ENCODE measurements at regions of chr17 and their contacts with region 1.

Region 1: GRCh38 chr17:46940621-46941404 is 17.9 kb downstream of the GOSR2 start:
- DNase-seq: no peak
- H3K4me3 ChIP-seq: no peak overlapping the region
- CTCF ChIP-seq: peak; percentile 96

Region 2: DNA sequence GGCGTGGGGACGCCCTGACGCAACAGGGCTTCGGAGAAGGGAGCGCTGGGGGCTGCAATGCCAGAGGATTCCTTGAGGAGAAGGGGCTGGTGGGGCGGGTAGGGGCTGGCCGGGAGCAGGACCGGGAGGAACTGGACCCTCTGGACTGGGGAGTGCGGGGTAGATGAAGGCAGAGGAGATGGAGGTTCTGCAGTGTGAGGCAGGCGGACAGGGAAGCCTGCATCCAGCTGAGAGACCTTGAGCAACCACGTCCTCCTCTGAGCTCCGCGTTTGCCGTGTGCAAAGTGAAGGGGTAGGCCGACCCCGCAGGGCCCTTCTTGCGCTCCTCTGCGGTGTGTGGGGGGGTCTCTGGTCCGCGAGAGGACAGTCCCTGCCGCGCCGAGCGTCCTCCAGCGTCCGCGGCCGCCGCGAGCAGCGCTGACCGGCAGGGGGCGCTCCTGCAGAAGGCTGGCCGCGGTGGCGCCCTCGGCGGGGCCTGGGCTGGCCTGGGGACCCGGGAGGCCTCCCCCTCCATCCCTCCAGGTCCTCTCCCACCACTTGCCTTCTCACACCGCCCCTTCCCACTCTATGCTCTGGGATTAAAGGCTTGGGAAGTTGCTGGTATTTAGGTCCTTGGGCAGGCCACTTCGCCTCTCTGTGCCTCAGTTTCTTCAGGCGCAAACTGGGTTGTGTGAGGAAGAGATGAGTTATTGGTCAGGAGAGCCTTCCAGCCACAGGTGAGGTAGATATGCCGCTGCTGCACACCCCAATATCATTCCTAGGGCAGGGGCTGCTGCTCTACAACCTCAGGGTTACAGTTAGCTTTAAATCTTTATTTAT is 99.0 kb before region 1 on chr17:
- CTCF ChIA-PET with region 1: interaction called, 94 read pairs
- POLR2A ChIA-PET with region 1: no interaction called
- DNase-seq: no peak
- H3K4me3 ChIP-seq: peak overlapping the region; percentile 37
- CTCF ChIP-seq: peak; percentile 69

Region 3: DNA sequence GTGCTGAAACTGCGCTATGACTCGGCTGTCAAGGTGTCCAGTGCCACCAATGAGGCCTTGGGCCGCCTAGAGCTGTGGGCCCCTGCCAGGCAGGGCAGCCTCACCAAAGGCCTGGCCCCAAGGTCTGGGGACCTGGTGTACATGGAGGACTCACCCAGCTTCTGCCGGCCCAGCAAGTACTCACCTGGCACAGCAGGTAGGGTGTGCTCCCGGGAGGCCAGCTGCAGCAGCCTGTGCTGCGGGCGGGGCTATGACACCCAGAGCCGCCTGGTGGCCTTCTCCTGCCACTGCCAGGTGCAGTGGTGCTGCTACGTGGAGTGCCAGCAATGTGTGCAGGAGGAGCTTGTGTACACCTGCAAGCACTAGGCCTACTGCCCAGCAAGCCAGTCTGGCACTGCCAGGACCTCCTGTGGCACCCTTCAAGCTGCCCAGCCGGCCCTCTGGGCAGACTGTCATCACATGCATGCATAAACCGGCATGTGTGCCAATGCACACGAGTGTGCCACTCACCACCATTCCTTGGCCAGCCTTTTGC is 64.4 kb before region 1 on chr17:
- CTCF ChIA-PET with region 1: no interaction called
- POLR2A ChIA-PET with region 1: no interaction called
- DNase-seq: no peak
- H3K4me3 ChIP-seq: no peak overlapping the region
- CTCF ChIP-seq: peak; percentile 31

Region 4: DNA sequence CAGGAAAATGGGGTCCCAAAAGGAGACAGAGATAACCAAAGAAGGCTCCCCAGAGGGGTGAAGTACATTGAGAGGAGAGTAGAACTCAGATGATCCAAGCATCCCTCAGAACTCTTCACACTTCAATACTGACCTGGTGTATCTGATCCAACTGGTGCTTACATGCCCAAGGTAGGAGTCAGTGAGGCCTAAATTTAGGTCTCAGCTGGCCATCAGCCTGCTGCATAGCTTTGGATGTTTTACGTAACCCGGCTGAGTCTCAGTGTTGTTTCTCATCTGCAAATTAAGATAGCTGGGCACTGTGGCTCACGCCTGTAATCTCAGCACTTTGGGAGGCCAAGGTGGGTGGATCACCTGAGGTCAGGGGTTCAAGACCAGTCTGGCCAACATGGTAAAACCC is 29.5 kb before region 1 on chr17:
- CTCF ChIA-PET with region 1: interaction called, 11 read pairs
- POLR2A ChIA-PET with region 1: no interaction called
- DNase-seq: no peak
- H3K4me3 ChIP-seq: no peak overlapping the region
- CTCF ChIP-seq: no peak

Region 5: GRCh38 chr17:46929413-46929812 is 11.4 kb before region 1 on chr17:
- CTCF ChIA-PET with region 1: interaction called, 61 read pairs
- POLR2A ChIA-PET with region 1: interaction called, 3 read pairs
- DNase-seq: no peak
- H3K4me3 ChIP-seq: no peak overlapping the region
- CTCF ChIP-seq: no peak

Region 6: DNA sequence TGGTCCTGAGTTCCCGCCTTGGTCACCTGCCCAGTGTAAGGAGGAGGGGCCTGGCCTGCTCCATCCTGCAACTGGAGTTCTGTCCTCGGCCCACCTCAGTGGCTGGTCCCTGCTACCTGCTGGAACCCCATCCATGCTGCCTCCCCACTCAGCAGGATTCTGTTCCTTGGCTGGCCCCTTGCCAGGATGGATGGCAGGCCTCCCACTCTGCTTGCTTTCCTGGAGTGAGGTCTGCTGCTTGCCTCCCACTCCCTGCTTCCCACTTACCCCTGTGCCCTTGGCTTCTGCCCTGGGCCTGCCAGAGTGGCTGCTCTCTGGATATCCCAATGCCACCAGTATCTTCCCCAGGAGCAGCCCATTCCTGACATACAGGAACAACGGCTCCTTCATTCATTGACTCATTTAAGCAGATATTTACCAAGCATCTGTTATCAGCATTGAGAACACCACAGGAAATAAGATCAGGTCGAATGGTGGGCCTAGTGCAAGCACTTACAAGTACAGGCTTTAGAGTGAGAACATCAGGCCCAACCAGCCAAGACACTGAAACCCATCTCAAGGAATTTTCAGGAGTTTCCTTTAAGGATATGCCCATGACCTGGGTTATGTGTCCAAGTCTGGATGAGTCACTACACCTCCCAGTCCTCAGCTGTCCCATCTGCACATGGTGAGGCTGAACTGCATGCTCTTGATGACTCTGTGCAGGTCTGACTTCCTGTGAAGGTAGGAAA is 55.2 kb after region 1 on chr17:
- CTCF ChIA-PET with region 1: interaction called, 44 read pairs
- POLR2A ChIA-PET with region 1: interaction called, 3 read pairs
- DNase-seq: no peak
- H3K4me3 ChIP-seq: no peak overlapping the region
- CTCF ChIP-seq: no peak

Region 7: DNA sequence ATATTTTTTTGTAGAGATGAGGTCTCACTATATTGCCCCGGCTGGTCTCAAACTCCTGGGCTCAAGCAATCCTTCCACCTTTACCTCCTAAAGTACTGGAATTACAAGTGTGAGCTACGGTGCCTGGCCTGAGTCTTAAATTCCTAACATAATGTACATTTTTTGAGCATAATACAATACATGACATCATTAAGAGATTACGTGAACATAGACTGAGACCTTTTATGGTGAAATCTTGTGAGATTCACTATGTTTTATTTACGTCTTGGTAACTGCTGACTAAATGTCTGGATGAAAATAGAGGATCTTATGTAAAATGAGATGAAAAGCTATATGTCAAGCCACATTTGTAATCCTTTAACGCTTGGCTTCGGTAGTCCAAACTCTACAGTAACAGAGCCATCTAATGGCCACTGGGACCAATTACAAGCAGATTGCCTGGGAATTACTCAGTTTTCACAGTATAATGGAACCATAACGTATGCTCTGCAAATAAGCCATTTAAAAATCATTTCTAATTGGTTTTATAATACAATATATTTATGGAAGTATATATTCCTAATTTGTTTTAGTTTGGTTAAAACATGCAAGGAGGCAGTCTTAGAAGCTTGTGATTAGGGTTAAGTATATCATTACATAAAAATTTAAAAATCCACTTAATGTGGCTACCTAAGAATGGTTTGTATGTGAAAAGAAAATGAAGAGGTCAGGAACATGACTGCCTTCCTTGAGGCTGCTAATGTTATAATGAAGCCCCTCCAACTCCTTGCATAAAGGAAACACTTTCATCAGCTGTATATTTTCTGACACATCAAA is 374.8 kb after region 1 on chr17:
- CTCF ChIA-PET with region 1: interaction called, 10 read pairs
- POLR2A ChIA-PET with region 1: no interaction called
- DNase-seq: peak; percentile 89
- H3K4me3 ChIP-seq: no peak overlapping the region
- CTCF ChIP-seq: peak; percentile 71

Measured in AG04449 (cell line).